ENCODE measurements at regions of chr19 and their contacts with region 1.

Region 1: GRCh38 chr19:18450931-18451845 is 13.3 kb upstream of the ISYNA1 start:
- DNase-seq: peak; percentile 64
- ATAC-seq: peak; percentile 91
- H3K4me3 ChIP-seq: no peak overlapping the region
- H3K27ac ChIP-seq: no peak overlapping the region
- H3K4me1 ChIP-seq: peaks cover 13% of the 10 kb centered on the region
- H3K27me3 ChIP-seq: no peaks in the 10 kb centered on the region
- CTCF ChIP-seq: peak; percentile 96
- POLR2A ChIP-seq: 0 out of 2 replicates have a peak, but pooled peaks have one; percentile 54
- RAD21 ChIP-seq: peak; percentile 95

Region 2: GRCh38 chr19:18557474-18558201 is 106.5 kb after region 1 on chr19 and contains the start of gene KXD1:
- CTCF ChIA-PET with region 1: no interaction called
- POLR2A ChIA-PET with region 1: interaction called, 3 read pairs
- dilution Hi-C with region 1: no loop called
- in situ Hi-C with region 1: no loop called
- intact Hi-C with region 1: loop called (anchors 5 kb)
- DNase-seq: peak; percentile 99
- ATAC-seq: peak; percentile 100
- H3K4me3 ChIP-seq: peak within 1 kb of the TSS; percentile 76
- H3K27ac ChIP-seq: peak within 1 kb of the TSS; percentile 65
- H3K4me1 ChIP-seq: 0 out of 2 replicates have a peak, but pooled peaks cover 2% of the 10 kb centered on the region
- H3K27me3 ChIP-seq: no peaks in the 10 kb centered on the region
- CTCF ChIP-seq: no peak
- POLR2A ChIP-seq: peak; percentile 72
- RAD21 ChIP-seq: no peak
- total RNA-seq, gene KXD1: 66.7 and 89.2 TPM in 2 replicates

Region 3: GRCh38 chr19:18588611-18589379 is 137.6 kb after region 1 on chr19 and contains the start of gene REX1BD:
- CTCF ChIA-PET with region 1: no interaction called
- POLR2A ChIA-PET with region 1: no interaction called
- dilution Hi-C with region 1: no loop called
- in situ Hi-C with region 1: no loop called
- intact Hi-C with region 1: loop called (anchors 1 kb)
- DNase-seq: peak; percentile 68
- ATAC-seq: peak; percentile 92
- H3K4me3 ChIP-seq: peak within 1 kb of the TSS; percentile 56
- H3K27ac ChIP-seq: peak within 1 kb of the TSS; percentile 52
- H3K4me1 ChIP-seq: peaks cover 5% of the 10 kb centered on the region
- H3K27me3 ChIP-seq: peaks cover 2% of the 10 kb centered on the region; the same call in 1 of the 2 replicates
- CTCF ChIP-seq: peak; percentile 75
- POLR2A ChIP-seq: peak; percentile 12; the same call in 1 of the 2 replicates
- RAD21 ChIP-seq: peak; percentile 45
- total RNA-seq, gene REX1BD: 14.2 and 19.2 TPM in 2 replicates

Region 4: GRCh38 chr19:18675779-18676178 is 224.6 kb after region 1 on chr19:
- CTCF ChIA-PET with region 1: no interaction called
- POLR2A ChIA-PET with region 1: no interaction called
- dilution Hi-C with region 1: no loop called
- in situ Hi-C with region 1: no loop called
- intact Hi-C with region 1: loop called (anchors 10 kb)
- DNase-seq: no peak
- ATAC-seq: no peak
- H3K4me3 ChIP-seq: no peak overlapping the region
- H3K27ac ChIP-seq: no peak overlapping the region
- H3K4me1 ChIP-seq: peaks cover 15% of the 10 kb centered on the region
- H3K27me3 ChIP-seq: no peaks in the 10 kb centered on the region
- CTCF ChIP-seq: peak; percentile 52
- POLR2A ChIP-seq: no peak
- RAD21 ChIP-seq: peak; percentile 61

Region 5: DNA sequence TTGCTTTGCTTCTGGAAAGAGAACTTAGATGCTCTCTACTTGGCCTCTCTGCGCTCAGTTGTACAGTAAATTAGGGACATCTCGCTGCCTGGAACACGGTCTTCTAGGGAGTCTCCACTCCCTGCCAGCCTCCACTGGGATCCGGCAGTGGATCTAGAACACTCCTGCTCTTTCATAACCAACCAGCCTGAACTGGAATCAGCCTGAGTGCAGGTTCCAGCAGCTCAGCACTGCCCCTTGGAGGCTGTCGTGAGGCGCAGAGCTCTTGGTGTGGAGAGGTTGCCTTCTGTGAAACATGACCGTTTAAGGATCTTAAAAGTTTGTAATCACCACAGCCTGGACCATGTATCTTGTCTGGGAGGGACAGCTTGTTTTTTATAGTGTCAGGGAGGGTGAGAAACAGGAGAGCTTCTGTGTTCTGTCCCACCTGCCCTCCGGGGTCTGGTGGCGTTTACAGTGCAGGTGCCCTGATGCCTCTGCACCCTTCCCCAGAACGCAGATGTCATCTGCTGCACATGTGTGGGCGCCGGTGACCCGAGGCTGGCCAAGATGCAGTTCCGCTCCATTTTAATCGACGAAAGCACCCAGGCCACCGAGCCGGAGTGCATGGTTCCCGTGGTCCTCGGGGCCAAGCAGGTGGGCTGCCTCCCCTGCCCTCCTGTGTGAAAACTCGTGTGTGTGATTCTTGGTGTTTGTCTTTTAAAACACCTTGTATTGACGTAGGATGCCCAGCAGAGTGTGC is 405.4 kb after region 1 on chr19:
- CTCF ChIA-PET with region 1: no interaction called
- POLR2A ChIA-PET with region 1: no interaction called
- dilution Hi-C with region 1: no loop called
- in situ Hi-C with region 1: loop called (anchors 5 kb)
- intact Hi-C with region 1: no loop called
- DNase-seq: no peak
- ATAC-seq: peak; percentile 69
- H3K4me3 ChIP-seq: no peak overlapping the region
- H3K27ac ChIP-seq: no peak overlapping the region
- H3K4me1 ChIP-seq: no peaks in the 10 kb centered on the region
- H3K27me3 ChIP-seq: no peaks in the 10 kb centered on the region
- CTCF ChIP-seq: peak; percentile 25; the same call in 1 of the 2 replicates
- POLR2A ChIP-seq: no peak
- RAD21 ChIP-seq: 0 out of 2 replicates have a peak, but pooled peaks have one; percentile 31

Measured in IMR-90 (cell line).